Posterior vena cava (tissue), 2 donors: ENCODE measurements at regions of chr11 and their contacts with region 1.

Region 1: DNA sequence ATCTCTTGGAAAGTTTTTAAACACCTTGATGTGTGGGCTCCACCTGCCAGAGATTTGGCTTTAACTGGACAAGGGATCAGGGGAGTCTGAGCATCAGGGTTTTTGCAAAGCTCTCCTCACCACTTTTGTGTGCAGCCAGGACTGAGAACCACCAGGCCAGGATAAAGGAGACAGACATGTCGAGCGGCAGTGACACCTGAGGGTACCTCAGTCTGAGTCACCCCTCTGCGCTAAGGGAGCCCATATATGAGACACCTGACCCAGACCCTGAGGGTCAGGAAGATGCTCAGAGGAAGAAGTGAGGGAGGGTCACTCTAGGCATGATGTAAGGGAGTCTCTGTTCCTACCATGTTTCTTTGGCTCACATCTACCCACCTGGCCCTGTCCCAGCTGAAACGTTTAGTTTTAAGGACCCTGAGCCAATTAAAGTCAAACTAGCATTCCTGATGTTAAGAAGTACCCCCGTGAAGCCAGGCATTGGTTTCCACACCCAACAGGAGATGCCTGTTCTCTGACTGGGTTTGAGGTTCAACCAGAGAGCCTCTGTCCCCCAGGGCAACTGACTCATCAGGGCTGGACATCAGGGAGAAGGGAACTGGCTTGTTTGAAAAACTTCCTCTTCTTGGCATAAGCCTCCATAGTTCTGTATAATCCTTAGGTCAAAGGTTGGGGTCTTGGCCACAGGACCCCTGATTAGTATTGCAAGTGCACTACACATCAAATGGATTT is 72.4 kb upstream of the BIRC3 start:
- DNase-seq: no peak

Region 2: DNA sequence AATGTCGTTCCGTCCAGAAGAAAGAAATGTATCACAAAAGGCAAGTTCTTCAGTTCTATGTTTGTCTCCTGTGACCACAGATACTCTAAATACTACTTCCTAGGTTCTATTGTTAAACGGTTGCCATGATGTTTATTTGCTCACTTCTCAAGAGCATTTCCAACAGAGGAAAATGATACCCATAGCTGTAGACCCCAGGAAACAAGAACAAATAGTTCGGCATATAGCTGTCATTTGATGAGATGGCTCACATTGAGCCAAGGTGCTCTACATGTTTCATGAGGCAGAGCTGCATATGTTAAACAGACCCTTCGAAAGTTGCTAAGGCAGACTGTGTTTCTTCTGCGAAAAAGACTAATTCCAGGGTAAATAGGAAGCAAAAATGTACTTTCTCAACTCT is 313.2 kb before region 1 on chr11:
- intact Hi-C with region 1: no loop called
- DNase-seq: no peak

Region 3: GRCh38 chr11:102177974-102178631 is 66.7 kb before region 1 on chr11:
- intact Hi-C with region 1: no loop called
- DNase-seq: no peak

Region 4: DNA sequence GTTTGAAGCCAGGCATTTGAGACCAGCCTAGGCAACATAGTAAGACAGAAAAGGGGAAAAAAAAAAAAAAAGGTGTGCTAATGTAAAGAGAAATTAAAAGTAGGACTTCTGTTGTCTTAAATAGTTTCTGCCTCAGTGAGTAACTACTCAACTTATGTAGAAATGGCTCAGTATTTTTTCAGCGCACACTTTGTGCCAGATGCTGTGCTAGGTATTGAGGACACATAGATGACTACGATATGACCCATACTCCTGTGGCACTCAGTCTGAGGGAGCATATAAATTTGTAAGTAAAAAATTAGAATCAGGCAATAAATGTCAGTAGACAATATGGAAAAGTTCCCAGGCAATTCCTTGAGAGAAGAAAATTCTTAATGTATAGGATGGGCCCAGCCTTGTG is 40.7 kb before region 1 on chr11:
- intact Hi-C with region 1: no loop called
- DNase-seq: no peak

Region 5: GRCh38 chr11:102279641-102280170 is 34.9 kb after region 1 on chr11:
- intact Hi-C with region 1: loop called in 1 of 2 experiments (anchors 5 kb)
- DNase-seq: no peak

Region 6: GRCh38 chr11:102317099-102317767 is 72.4 kb after region 1 on chr11 and contains the start of gene BIRC3:
- intact Hi-C with region 1: no loop called
- DNase-seq: peak; percentile 94
- total RNA-seq, gene BIRC3: 11.4 to 37.0 TPM